ENCODE measurements at regions of chr19 and their contacts with region 1.

Region 1: GRCh38 chr19:18521885-18522624 is at the start of gene ELL:
- DNase-seq: peak; percentile 96
- H3K4me3 ChIP-seq: peak within 1 kb of the TSS; percentile 73 to 97
- H3K27ac ChIP-seq: peak within 1 kb of the TSS; percentile 72 to 95
- H3K4me1 ChIP-seq: peaks cover 4 to 11% of the 10 kb centered on the region in 2 experiments; a peak in 1 of 4 replicates
- H3K27me3 ChIP-seq: no peaks in the 10 kb centered on the region
- CTCF ChIP-seq: no peak
- EP300 ChIP-seq: no peak
- RAD21 ChIP-seq: no peak
- polyA plus RNA-seq, gene ELL: 3.6 and 7.4 TPM in 2 replicates

Region 2: GRCh38 chr19:18469069-18469846 is 52.8 kb before region 1 on chr19:
- CTCF ChIA-PET with region 1: interaction called, 13 read pairs
- POLR2A ChIA-PET with region 1: no interaction called
- DNase-seq: peak; percentile 82
- H3K4me3 ChIP-seq: no peak overlapping the region; a peak in 1 of 4 replicates
- H3K27ac ChIP-seq: no peak overlapping the region
- H3K4me1 ChIP-seq: peaks cover 0 to 5% of the 10 kb centered on the region in 2 experiments; a peak in 1 of 4 replicates
- H3K27me3 ChIP-seq: no peaks in the 10 kb centered on the region
- CTCF ChIP-seq: peak; percentile 84
- EP300 ChIP-seq: no peak
- RAD21 ChIP-seq: peak; percentile 59

Region 3: DNA sequence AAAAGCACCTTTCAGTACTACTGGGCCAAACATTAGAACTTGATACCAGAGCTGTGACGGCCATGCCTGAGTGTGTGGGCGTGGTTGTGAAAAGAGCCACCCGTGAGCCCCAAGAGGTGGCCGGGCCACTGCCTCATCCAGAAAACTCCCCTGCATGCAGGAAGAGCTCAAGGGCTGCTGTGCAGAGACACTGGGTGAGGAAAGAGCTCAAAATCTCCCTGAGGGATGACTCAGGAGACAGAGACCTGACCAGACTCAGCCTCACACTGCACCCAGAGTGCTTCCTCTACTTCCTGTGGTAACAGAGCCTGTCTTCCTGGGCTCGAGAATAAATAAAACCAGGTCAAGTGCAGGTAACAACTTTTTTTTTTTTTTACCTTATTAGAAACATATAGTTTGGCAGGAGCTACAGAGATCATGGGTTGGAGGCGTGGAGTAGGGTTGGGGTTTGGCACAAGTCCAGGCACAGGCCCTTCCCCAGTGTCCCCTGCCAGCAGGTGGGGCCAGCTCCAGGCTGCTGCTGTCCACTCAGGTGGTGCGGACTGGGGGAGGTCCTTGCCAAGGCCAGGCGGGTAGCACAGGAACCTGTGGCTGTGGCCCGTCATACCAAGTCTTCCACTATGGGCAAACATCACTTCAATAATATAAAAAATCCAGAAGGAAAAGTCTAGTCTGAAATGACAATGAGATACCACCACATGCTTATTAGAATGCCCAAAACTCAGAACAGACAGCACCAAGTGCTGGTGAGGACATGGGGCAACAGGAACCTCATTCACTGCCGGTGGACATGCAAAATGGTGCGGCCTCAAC is 25.7 kb before region 1 on chr19:
- CTCF ChIA-PET with region 1: interaction called, 15 read pairs
- POLR2A ChIA-PET with region 1: no interaction called
- DNase-seq: no peak
- H3K4me3 ChIP-seq: no peak overlapping the region
- H3K27ac ChIP-seq: peak overlapping the region; percentile 6 to 20; a peak in 3 of 4 replicates
- H3K4me1 ChIP-seq: peaks cover 11 to 50% of the 10 kb centered on the region in 2 experiments; a peak in 2 of 4 replicates
- H3K27me3 ChIP-seq: no peaks in the 10 kb centered on the region
- CTCF ChIP-seq: no peak
- EP300 ChIP-seq: no peak
- RAD21 ChIP-seq: no peak

Region 4: GRCh38 chr19:18503971-18504885 is 17.8 kb before region 1 on chr19:
- CTCF ChIA-PET with region 1: interaction called, 58 read pairs
- POLR2A ChIA-PET with region 1: interaction called, 3 read pairs
- DNase-seq: no peak
- H3K4me3 ChIP-seq: no peak overlapping the region
- H3K27ac ChIP-seq: no peak overlapping the region; a peak in 1 of 4 replicates
- H3K4me1 ChIP-seq: peaks cover 0 to 75% of the 10 kb centered on the region in 2 experiments; a peak in 1 of 4 replicates
- H3K27me3 ChIP-seq: no peaks in the 10 kb centered on the region
- CTCF ChIP-seq: no peak
- EP300 ChIP-seq: no peak
- RAD21 ChIP-seq: no peak

Region 5: DNA sequence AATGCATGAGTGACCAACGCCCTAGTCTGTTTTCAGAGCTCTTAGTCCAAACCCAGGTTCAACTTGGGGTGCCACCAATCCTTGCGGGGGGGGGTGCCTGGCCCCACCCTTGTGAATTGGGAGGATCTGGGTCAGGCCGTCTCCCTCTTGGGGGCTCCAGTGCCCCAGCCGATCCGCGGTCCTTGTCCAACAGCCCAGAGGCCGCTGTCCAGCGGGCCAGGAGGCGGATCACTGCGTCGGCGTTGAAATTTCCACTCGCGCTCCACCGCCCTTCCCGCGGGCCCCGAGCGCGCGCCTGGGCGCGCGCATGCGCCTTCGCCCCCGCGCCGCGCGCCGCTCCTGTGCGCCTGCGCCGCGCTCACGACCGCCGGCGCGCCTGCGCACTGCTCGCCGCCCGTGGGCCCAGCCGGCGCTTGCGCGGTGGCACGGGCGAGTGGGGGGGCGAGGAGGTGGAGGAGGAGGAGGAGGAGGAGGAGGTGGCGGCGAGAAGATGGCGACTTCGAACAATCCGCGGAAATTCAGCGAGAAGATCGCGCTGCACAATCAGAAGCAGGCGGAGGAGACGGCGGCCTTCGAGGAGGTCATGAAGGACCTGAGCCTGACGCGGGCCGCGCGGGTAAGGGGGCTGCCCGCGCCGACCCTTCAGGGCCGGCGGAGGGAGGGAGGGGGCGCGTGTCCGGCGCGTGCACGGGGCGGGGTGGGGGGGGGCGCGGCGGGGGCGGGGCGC is 161.3 kb after region 1 on chr19 and contains the start of gene CRTC1:
- CTCF ChIA-PET with region 1: no interaction called
- POLR2A ChIA-PET with region 1: no interaction called
- DNase-seq: peak; percentile 99
- H3K4me3 ChIP-seq: peak within 1 kb of the TSS; percentile 59 to 67
- H3K27ac ChIP-seq: peak within 1 kb of the TSS; percentile 49 to 83; a peak in 3 of 4 replicates
- H3K4me1 ChIP-seq: peaks cover 4 to 15% of the 10 kb centered on the region in 2 experiments; a peak in 2 of 4 replicates
- H3K27me3 ChIP-seq: no peaks in the 10 kb centered on the region
- CTCF ChIP-seq: peak; percentile 15; the same call in 1 of the 2 replicates
- EP300 ChIP-seq: no peak
- RAD21 ChIP-seq: peak; percentile 27; the same call in 1 of the 2 replicates
- polyA plus RNA-seq, gene CRTC1: 2.2 and 5.0 TPM in 2 replicates

Measured in SK-N-SH (cell line).